GM12878 (cell line): ENCODE measurements at regions of chr6 and their contacts with region 1.

Region 1: DNA sequence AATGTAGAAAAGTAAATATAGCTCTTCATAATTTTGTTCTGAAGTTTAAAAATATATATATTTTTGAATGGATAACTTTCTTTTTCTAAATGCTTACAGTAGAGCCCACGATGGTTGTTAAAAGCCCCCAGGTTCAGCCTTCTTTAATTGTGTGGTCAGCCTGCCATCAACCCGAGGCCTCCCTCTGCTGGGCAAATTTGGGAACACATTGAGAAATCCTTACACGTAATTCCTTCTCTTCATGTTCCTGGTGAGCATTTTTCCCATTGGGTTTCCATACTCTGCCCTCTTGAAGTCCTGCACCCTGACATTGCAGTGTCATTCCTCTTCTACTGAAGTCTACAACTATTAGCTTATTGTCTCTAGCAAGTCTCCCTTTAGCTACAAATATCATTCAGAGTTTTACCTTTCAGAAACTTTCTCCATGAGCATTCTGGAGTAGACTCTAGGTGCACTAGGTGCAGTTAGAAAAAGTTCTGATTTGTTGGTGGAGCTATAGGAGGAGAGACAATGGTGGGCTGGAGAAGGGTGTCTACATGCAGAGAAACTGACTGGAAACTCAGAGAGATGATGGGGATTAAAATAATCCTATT is 40.6 kb downstream of the TRIM38 start:
- DNase-seq: no peak
- ATAC-seq: peak; percentile 65
- H3K4me3 ChIP-seq: no peak overlapping the region
- H3K27ac ChIP-seq: no peak overlapping the region
- H3K4me1 ChIP-seq: no peaks in the 10 kb centered on the region
- H3K27me3 ChIP-seq: no peaks in the 10 kb centered on the region
- CTCF ChIP-seq: peak; percentile 70 to 79 (median 71)
- EP300 ChIP-seq: no peak
- POLR2A ChIP-seq: no peak
- RAD21 ChIP-seq: peak; percentile 84

Region 2: DNA sequence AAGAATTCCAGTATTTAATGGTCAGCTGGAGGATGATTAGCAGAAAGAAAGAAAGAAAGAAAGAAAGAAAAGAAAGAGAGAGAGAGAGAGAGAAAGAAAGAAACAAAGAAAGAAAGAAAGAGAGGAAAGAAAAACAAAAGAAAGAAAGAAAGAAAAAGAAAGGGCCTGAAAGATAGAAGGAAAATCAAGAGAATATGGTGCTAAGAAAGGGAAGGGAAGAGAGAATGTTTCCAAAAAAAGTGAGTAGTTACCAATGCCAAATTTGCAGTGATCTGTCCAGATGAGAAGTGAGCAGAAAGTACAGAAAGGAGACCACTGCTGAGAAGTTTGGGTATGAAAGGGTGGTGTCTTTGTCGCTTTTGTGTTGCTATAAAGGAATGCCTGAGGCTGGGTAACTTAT is 222.1 kb before region 1 on chr6:
- CTCF ChIA-PET with region 1: interaction called, 89 read pairs
- POLR2A ChIA-PET with region 1: no interaction called
- RAD21 ChIA-PET with region 1: no interaction called
- SMC1A ChIA-PET with region 1: interaction called, 39 read pairs
- in situ Hi-C with region 1: loop called (anchors 5 kb)
- intact Hi-C with region 1: no loop called
- DNase-seq: no peak
- ATAC-seq: no peak
- H3K4me3 ChIP-seq: no peak overlapping the region
- H3K27ac ChIP-seq: no peak overlapping the region
- H3K4me1 ChIP-seq: no peaks in the 10 kb centered on the region
- H3K27me3 ChIP-seq: peaks cover 0 to 3% of the 10 kb centered on the region in 2 experiments; a peak in 2 of 4 replicates
- CTCF ChIP-seq: no peak
- EP300 ChIP-seq: no peak
- POLR2A ChIP-seq: no peak
- RAD21 ChIP-seq: no peak

Region 3: GRCh38 chr6:25942561-25943147 is 60.5 kb before region 1 on chr6:
- CTCF ChIA-PET with region 1: interaction called, 16 read pairs
- POLR2A ChIA-PET with region 1: no interaction called
- RAD21 ChIA-PET with region 1: interaction called, 3 read pairs
- SMC1A ChIA-PET with region 1: interaction called, 23 read pairs
- in situ Hi-C with region 1: no loop called
- intact Hi-C with region 1: no loop called
- DNase-seq: no peak
- ATAC-seq: peak; percentile 82
- H3K4me3 ChIP-seq: no peak overlapping the region
- H3K27ac ChIP-seq: no peak overlapping the region
- H3K4me1 ChIP-seq: no peaks in the 10 kb centered on the region
- H3K27me3 ChIP-seq: no peaks in the 10 kb centered on the region
- CTCF ChIP-seq: peak; percentile 53 to 82 (median 62); a peak in 5 of 6 replicates
- EP300 ChIP-seq: no peak
- POLR2A ChIP-seq: no peak
- RAD21 ChIP-seq: peak; percentile 86

Region 4: GRCh38 chr6:25971187-25971811 is 31.9 kb before region 1 on chr6:
- CTCF ChIA-PET with region 1: interaction called, 46 read pairs
- POLR2A ChIA-PET with region 1: interaction called, 6 read pairs
- RAD21 ChIA-PET with region 1: interaction called, 7 read pairs
- SMC1A ChIA-PET with region 1: interaction called, 12 read pairs
- in situ Hi-C with region 1: no loop called
- intact Hi-C with region 1: no loop called
- DNase-seq: no peak
- ATAC-seq: peak; percentile 19
- H3K4me3 ChIP-seq: 0 out of 2 replicates have a peak overlapping the region, but pooled peaks have one; percentile 13
- H3K27ac ChIP-seq: no peak overlapping the region; the same call in 1 of the 2 replicates
- H3K4me1 ChIP-seq: peaks cover 23% of the 10 kb centered on the region
- H3K27me3 ChIP-seq: no peaks in the 10 kb centered on the region
- CTCF ChIP-seq: no peak
- EP300 ChIP-seq: no peak
- POLR2A ChIP-seq: no peak
- RAD21 ChIP-seq: no peak

Region 5: DNA sequence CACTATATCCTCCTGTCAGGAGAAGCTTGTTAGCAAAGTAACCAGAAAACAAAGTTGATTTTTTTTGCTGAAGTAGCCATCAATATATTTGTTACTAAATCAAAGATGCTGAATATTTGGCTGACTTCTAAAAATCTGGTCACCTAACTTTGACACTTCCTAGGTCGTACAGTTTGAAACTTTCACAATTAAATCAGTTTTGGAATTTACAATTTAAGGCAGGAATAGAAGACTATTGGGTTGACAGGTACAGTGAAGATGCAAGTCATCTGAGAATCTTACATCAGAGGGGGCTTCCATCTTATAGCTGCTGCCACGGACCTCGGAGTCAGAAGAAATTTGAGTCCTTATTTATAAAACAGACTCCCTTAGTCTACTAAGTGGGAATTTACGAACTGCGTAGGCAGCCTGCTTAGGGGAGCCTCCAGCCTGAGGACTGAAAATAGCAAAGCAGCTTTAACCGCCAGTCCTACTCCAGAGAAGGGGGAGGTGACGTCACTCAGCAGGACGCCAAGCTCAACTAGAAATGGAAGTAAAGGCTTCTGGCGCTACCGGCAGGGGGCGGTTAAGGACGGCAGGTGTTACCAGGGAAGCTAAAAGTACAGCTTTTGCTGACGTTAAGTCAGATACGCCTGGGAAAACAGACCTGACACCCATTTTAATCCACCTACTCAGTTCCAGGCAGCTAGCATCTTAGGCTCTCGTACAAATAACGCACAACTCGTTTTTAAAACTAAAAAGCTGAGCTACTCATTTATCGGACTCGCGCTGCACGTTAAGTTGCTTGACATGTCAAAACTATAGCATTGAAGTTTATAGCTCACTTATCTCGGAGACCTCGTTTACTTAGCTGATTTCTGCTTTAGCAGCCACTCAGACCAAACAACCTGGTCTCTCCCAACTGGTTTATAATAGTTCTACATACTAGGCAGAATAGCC is 23.0 kb after region 1 on chr6:
- CTCF ChIA-PET with region 1: interaction called, 96 read pairs
- POLR2A ChIA-PET with region 1: interaction called, 7 read pairs
- RAD21 ChIA-PET with region 1: interaction called, 6 read pairs
- SMC1A ChIA-PET with region 1: interaction called, 9 read pairs
- in situ Hi-C with region 1: no loop called
- intact Hi-C with region 1: no loop called
- DNase-seq: peak; percentile 89
- ATAC-seq: peak; percentile 53
- H3K4me3 ChIP-seq: peak overlapping the region; percentile 63
- H3K27ac ChIP-seq: peak overlapping the region; percentile 95
- H3K4me1 ChIP-seq: peaks cover 12% of the 10 kb centered on the region
- H3K27me3 ChIP-seq: no peaks in the 10 kb centered on the region
- CTCF ChIP-seq: peak; percentile 82 to 95 (median 94)
- EP300 ChIP-seq: peak in 1 of 2 experiments; percentile 51; a peak in 2 of 4 replicates
- POLR2A ChIP-seq: no peak
- RAD21 ChIP-seq: peak; percentile 54